ENCODE measurements at regions of chr3 and their contacts with region 1.

Region 1: DNA sequence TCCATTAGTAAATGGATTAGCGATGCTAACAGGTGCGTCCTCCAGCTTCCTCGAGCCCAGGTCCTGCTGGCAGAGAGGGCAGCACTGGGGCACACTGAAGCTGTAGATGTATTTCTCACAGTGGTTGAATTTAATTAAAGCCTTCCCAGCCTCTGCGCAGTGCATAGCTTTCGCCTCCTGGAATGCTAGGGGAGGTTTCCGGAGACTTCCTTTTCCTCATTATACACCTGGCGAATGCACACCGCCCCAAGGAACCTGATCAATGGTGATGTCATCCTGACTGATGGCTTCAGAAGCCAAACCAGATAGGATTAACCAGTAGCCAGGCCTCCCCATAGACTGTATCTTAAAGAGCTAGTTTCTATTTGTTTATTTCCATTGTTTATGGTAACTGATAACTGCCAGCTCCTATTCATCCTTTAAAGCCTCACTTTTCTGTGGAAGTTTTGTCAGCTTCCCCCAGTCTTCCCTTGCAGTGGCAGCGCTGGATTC is at the start of gene MKRN2OS:
- DNase-seq: peak; percentile 86
- H3K4me3 Mint-ChIP-seq: peak within 1 kb of the TSS; percentile 73
- H3K27ac Mint-ChIP-seq: peak within 1 kb of the TSS; percentile 64
- H3K4me1 Mint-ChIP-seq: peaks cover 7% of the 10 kb centered on the region
- H3K27me3 Mint-ChIP-seq: no peaks in the 10 kb centered on the region
- CTCF ChIP-seq: no peak
- total RNA-seq, gene MKRN2OS: 0.37 and 0.47 TPM in 2 replicates

Region 2: GRCh38 chr3:12508291-12508700 is 37.0 kb before region 1 on chr3:
- CTCF ChIA-PET with region 1: interaction called, 3 read pairs
- POLR2A ChIA-PET with region 1: interaction called, 14 read pairs
- intact Hi-C with region 1: no loop called
- DNase-seq: peak; percentile 91
- H3K4me3 Mint-ChIP-seq: peak overlapping the region; percentile 69
- H3K27ac Mint-ChIP-seq: peak overlapping the region; percentile 93
- H3K4me1 Mint-ChIP-seq: peaks cover 23% of the 10 kb centered on the region
- H3K27me3 Mint-ChIP-seq: no peaks in the 10 kb centered on the region
- CTCF ChIP-seq: no peak

Region 3: DNA sequence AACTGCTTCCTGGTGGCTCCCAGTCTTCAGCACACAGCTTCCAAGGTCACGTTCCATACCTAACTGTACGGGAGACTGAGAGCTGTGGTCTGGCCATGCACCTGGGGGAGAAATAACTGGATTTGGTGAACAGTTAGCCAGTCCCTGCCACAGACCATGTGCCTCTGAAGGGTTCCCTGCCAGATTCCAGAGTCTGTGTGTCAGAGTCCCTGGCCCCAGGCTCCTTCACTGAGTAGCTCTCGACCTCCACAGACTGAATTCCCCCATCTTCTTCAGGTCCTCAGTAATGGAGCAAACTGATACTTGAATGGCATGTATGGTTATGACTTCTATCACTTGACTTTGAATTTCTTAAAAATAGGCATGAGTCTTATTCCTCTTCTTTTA is 17.6 kb before region 1 on chr3:
- CTCF ChIA-PET with region 1: interaction called, 3 read pairs
- POLR2A ChIA-PET with region 1: interaction called, 11 read pairs
- intact Hi-C with region 1: no loop called
- DNase-seq: no peak
- H3K4me3 Mint-ChIP-seq: no peak overlapping the region
- H3K27ac Mint-ChIP-seq: peak overlapping the region; percentile 44
- H3K4me1 Mint-ChIP-seq: no peaks in the 10 kb centered on the region
- H3K27me3 Mint-ChIP-seq: no peaks in the 10 kb centered on the region
- CTCF ChIP-seq: no peak

Region 4: GRCh38 chr3:12556671-12557472 is 11.5 kb after region 1 on chr3 and contains the start of gene MKRN2:
- CTCF ChIA-PET with region 1: interaction called, 11 read pairs
- POLR2A ChIA-PET with region 1: interaction called, 77 read pairs
- intact Hi-C with region 1: no loop called
- DNase-seq: peak; percentile 89
- H3K4me3 Mint-ChIP-seq: peak within 1 kb of the TSS; percentile 73
- H3K27ac Mint-ChIP-seq: peak within 1 kb of the TSS; percentile 65
- H3K4me1 Mint-ChIP-seq: peaks cover 35% of the 10 kb centered on the region
- H3K27me3 Mint-ChIP-seq: no peaks in the 10 kb centered on the region
- CTCF ChIP-seq: no peak
- total RNA-seq, gene MKRN2: 22.0 and 25.6 TPM in 2 replicates

Region 5: GRCh38 chr3:12796171-12797123 is 251.1 kb after region 1 on chr3 and contains the start of gene CAND2:
- CTCF ChIA-PET with region 1: no interaction called
- POLR2A ChIA-PET with region 1: no interaction called
- intact Hi-C with region 1: no loop called
- DNase-seq: no peak
- H3K4me3 Mint-ChIP-seq: peak within 1 kb of the TSS; percentile 33
- H3K27ac Mint-ChIP-seq: no peak within 1 kb of the TSS
- H3K4me1 Mint-ChIP-seq: no peaks in the 10 kb centered on the region
- H3K27me3 Mint-ChIP-seq: no peaks in the 10 kb centered on the region
- CTCF ChIP-seq: no peak
- total RNA-seq, gene CAND2: not detected in 2 replicates

Measured in MCF 10A (cell line).